ENCODE measurements at regions of chr22 and their contacts with region 1.

Region 1: GRCh38 chr22:19730655-19731360 is 7.5 kb downstream of the GP1BB start:
- DNase-seq: peak; percentile 89
- ATAC-seq: peak; percentile 93
- H3K4me3 Mint-ChIP-seq: peak overlapping the region; percentile 58
- H3K27ac Mint-ChIP-seq: no peak overlapping the region
- H3K4me1 Mint-ChIP-seq: peaks cover 2% of the 10 kb centered on the region
- H3K27me3 Mint-ChIP-seq: no peaks in the 10 kb centered on the region

Region 2: DNA sequence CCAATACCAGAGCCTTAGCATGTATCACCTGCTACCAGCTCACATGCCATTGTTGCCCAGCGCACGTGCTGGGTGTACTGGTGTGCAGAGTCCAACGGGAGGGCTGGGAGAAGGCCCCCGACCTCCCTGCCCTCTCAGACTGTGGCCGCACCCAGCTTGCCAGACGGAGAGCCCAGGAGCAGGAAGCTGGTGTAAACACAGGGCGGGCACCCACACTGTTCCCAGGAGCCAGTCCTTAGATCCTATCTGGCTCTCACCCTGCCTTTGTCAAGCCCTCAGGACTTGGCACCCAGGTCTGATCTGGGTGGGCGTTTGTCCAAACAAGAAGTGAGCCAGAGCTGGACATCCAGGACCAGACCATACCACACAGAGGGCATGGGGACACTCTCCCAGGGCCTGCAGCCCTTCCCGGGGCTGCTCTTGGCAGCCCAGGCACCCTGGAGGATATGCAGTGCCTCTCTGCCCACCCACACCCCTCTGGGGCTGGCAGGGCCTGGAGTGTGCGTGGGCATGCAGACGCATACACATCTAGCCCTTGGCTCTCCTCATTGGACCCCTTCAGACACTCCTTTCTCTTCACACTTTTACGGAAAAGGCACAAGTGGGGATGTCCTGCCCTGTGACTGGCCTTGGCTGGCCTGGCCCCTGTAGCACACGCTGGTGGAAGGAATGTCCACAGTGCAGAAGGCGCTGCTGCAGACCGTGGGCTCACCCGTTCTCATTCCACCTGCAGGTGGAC is 186.7 kb before region 1 on chr22:
- CTCF ChIA-PET with region 1: no interaction called
- POLR2A ChIA-PET with region 1: no interaction called
- DNase-seq: no peak
- ATAC-seq: no peak
- H3K4me3 Mint-ChIP-seq: no peak overlapping the region
- H3K27ac Mint-ChIP-seq: no peak overlapping the region
- H3K4me1 Mint-ChIP-seq: no peaks in the 10 kb centered on the region
- H3K27me3 Mint-ChIP-seq: peaks cover 9% of the 10 kb centered on the region

Region 3: DNA sequence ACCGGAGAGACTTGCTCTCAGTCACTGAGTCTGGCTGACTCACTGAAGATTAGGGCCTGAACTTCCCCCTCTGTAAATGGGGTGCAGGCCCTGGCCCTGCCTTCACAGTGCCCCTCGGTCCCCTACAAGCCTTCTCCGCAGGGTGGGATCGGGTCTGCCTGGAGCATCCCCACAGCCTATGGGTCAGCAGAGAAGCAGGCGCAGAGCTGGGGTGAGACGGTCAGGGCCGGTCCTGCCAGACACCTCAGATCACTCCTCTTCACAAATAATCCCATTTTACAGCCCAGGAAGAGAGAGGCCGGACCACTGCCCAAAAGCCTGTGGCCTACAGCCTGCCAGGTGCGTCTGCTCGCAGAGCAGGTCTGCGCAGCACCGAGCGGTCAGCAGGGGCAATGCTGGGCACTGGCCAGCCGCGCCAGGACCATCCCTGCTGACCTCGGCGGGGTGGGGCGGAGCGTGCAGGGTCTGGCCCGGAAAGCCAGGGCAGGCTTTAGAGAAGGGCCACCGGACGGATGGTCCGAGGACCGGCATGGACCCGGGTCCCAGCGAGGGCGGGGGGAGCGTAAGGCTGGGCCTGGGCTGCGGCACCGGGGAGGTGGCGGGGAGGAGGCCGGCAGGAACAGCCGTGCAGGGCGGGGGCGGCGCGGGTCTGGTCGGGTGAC is 17.0 kb before region 1 on chr22:
- CTCF ChIA-PET with region 1: no interaction called
- POLR2A ChIA-PET with region 1: no interaction called
- DNase-seq: no peak
- ATAC-seq: no peak
- H3K4me3 Mint-ChIP-seq: peak overlapping the region; percentile 48
- H3K27ac Mint-ChIP-seq: no peak overlapping the region
- H3K4me1 Mint-ChIP-seq: peaks cover 3% of the 10 kb centered on the region
- H3K27me3 Mint-ChIP-seq: peaks cover 22% of the 10 kb centered on the region

Region 4: DNA sequence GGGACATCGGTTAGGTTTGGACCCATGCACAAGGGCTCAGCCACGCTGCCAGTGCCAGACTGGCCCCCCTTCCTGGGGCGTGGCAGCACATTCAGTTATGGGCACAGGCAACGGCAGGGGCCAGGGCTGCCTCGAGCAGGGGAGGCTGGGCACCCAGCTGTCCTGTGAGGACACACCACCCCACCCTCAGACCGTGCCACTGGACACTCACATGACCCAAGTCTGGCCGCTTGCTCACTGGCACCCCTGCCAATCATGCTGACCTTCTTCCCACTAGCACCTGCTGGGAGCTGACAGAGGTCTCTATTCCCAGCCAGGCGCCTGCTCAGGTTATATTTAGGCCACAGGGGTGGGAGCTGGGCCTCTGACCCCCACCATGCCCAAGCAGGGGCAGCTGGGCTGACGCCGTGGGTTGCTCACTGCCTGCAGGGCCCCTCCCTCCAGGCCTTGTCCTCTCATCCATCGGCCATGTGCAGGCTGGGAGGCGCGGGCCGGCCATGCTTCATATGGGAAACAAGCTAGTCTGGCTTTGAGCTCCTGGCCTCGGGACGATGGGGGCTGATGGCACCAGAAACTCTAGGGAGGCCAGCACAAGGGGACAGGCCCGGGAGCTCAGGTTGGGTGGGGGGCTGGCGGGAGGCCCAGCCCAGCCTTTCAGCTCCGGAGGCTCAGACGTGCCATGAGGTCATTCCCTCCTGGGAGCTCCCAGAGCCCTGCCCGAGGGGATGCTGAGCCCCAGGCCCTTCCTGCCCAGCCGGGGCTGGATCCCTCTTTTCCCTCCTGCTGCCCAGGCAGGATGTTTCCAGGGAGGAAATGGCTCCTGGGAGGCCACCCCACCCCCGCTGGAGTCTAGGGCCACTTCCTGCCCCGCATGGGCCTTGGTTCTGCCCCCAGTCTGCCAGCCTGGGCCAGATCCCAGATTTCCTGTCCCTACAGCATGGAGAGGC is 14.6 kb after region 1 on chr22:
- CTCF ChIA-PET with region 1: interaction called, 11 read pairs
- POLR2A ChIA-PET with region 1: no interaction called
- DNase-seq: no peak
- ATAC-seq: no peak
- H3K4me3 Mint-ChIP-seq: no peak overlapping the region
- H3K27ac Mint-ChIP-seq: no peak overlapping the region
- H3K4me1 Mint-ChIP-seq: no peaks in the 10 kb centered on the region
- H3K27me3 Mint-ChIP-seq: no peaks in the 10 kb centered on the region

Region 5: GRCh38 chr22:19761500-19762314 is 30.9 kb after region 1 on chr22:
- CTCF ChIA-PET with region 1: interaction called, 11 read pairs
- POLR2A ChIA-PET with region 1: no interaction called
- DNase-seq: no peak
- ATAC-seq: no peak
- H3K4me3 Mint-ChIP-seq: no peak overlapping the region
- H3K27ac Mint-ChIP-seq: no peak overlapping the region
- H3K4me1 Mint-ChIP-seq: peaks cover 26% of the 10 kb centered on the region
- H3K27me3 Mint-ChIP-seq: peaks cover 63% of the 10 kb centered on the region

Region 6: DNA sequence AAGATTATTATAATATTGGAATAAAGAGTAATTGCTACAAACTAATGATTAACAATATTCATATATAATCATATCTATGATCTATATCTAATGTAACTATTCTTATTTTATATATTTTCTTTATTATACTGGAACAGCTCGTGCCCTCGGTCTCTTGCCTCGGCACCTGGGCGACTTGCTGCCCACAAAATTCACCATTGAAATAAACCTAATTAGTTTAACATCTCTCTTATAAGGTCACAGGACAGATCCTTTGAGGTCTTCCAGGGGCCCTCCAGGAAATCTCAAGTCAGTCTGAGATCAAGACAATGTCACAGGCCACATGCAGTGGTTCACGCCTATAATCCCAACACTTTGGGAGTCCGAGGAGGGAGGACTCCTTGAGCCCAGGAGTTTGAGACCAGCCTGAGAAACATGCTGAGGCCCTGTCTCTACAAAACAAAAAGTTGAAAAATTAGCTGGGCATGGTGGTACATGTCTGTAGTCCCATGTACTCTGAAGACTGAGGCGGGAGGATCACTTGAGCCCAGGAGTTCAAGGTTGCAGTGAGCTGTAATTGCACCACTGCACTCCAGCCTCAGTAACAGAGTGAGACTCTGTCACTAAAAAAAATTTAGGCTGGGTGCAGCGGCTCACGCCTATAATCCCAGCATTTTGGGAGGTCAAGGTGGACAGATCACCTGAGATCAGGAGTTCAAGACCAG is 217.4 kb after region 1 on chr22:
- CTCF ChIA-PET with region 1: interaction called, 15 read pairs
- POLR2A ChIA-PET with region 1: no interaction called
- DNase-seq: no peak
- ATAC-seq: no peak
- H3K4me3 Mint-ChIP-seq: no peak overlapping the region
- H3K27ac Mint-ChIP-seq: no peak overlapping the region
- H3K4me1 Mint-ChIP-seq: peaks cover 31% of the 10 kb centered on the region
- H3K27me3 Mint-ChIP-seq: no peaks in the 10 kb centered on the region

Measured in activated CD8-positive, alpha-beta T cell treated with anti-CD3 and anti-CD28 coated beads, Interleukin-2, amount 10 ng/mL, durations not matched to agents 7 days and 5 days (primary cell).